ENCODE measurements at regions of chr21 and their contacts with region 1.

Region 1: DNA sequence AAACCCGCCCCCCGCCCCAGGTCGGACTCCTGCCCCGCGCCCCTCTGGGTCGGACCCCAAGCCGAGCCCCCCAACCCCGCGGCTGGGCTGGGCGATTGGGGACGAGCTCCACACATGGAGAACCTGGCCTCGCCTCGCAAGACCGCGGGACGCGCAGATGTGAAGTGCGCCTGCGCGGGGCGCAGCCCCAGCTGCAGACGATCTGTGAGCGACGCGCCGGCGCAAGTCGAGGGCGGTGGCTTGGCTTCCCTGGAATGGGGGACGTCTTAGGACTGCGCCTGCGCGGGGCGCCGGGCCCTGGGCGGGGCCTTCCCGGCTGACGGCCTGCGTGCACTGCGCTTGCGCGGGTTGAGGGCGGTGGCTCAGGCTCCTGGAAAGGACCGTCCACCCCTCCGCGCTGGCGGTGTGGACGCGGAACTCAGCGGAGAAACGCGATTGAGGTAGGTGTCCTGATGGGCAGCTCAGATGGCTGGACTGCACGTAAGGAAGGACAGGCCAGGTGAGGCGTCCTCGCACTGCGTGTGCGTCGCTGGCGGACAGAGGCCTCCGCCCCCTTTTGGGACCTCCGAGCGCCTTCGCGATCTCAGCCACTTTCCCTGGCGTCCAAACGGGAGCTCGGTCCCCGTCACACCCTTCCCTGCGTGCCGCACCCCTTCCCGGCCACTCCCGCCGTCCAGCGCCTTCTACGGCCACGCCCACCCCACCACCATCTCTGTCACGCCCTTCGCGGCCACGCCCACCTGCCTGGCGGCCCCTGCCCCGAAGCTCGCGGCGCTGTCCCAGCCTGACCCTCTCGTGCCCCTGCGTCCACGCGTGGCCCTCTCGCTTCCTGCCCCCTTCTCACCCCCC is at the start of gene PRMT2:
- DNase-seq: peak; percentile 100
- ATAC-seq: peak; percentile 92
- H3K4me3 Mint-ChIP-seq: peak within 1 kb of the TSS; percentile 89
- H3K27ac Mint-ChIP-seq: peak within 1 kb of the TSS; percentile 94
- H3K4me1 Mint-ChIP-seq: peaks cover 60% of the 10 kb centered on the region
- H3K27me3 Mint-ChIP-seq: no peaks in the 10 kb centered on the region
- total RNA-seq, gene PRMT2: 153 to 157 TPM

Region 2: GRCh38 chr21:46424039-46424591 is 211.4 kb before region 1 on chr21:
- POLR2A ChIA-PET with region 1: interaction called, 20 read pairs
- DNase-seq: peak; percentile 72
- ATAC-seq: peak; percentile 51
- H3K4me3 Mint-ChIP-seq: peak overlapping the region; percentile 83
- H3K27ac Mint-ChIP-seq: peak overlapping the region; percentile 97
- H3K4me1 Mint-ChIP-seq: peaks cover 21% of the 10 kb centered on the region
- H3K27me3 Mint-ChIP-seq: no peaks in the 10 kb centered on the region

Region 3: DNA sequence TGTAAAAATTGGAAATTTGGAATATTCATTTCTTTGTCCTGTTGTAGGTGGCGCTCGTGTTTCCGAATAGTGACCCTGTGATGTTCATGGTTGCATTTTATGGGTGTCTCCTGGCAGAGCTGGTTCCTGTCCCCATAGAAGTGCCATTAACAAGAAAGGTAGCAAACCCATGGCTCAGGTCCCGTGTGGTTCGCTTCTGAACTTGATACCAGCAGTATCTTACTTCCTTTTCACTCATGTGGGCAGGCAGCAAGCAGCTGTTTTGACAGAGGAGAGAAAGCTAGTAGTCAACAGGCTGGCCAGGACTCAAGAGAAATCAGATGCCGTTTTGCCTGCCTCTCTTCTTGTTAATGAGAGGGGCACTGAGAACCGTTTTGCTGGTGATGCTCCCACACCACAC is 103.5 kb before region 1 on chr21:
- POLR2A ChIA-PET with region 1: interaction called, 11 read pairs
- DNase-seq: no peak
- ATAC-seq: peak; percentile 72
- H3K4me3 Mint-ChIP-seq: no peak overlapping the region
- H3K27ac Mint-ChIP-seq: peak overlapping the region; percentile 76
- H3K4me1 Mint-ChIP-seq: peaks cover 7% of the 10 kb centered on the region
- H3K27me3 Mint-ChIP-seq: no peaks in the 10 kb centered on the region

Region 4: GRCh38 chr21:46559291-46559983 is 76.1 kb before region 1 on chr21:
- POLR2A ChIA-PET with region 1: interaction called, 80 read pairs
- DNase-seq: peak; percentile 76
- ATAC-seq: peak; percentile 71
- H3K4me3 Mint-ChIP-seq: peak overlapping the region; percentile 82
- H3K27ac Mint-ChIP-seq: peak overlapping the region; percentile 98
- H3K4me1 Mint-ChIP-seq: peaks cover 45% of the 10 kb centered on the region
- H3K27me3 Mint-ChIP-seq: no peaks in the 10 kb centered on the region

Region 5: GRCh38 chr21:46622226-46622625 is 13.3 kb before region 1 on chr21:
- POLR2A ChIA-PET with region 1: interaction called, 76 read pairs
- DNase-seq: peak; percentile 59
- ATAC-seq: peak; percentile 92
- H3K4me3 Mint-ChIP-seq: peak overlapping the region; percentile 77
- H3K27ac Mint-ChIP-seq: peak overlapping the region; percentile 93
- H3K4me1 Mint-ChIP-seq: peaks cover 40% of the 10 kb centered on the region
- H3K27me3 Mint-ChIP-seq: no peaks in the 10 kb centered on the region

Measured in activated naive CD8-positive, alpha-beta T cell treated with anti-CD3 and anti-CD28 coated beads, Interleukin-2, amount 10 ng/mL, durations not matched to agents 7 days and 5 days (primary cell).